PC-9 (cell line): ENCODE measurements at regions of chr1 and their contacts with region 1.

Region 1: GRCh38 chr1:32205401-32206370 is at the start of gene IQCC:
- DNase-seq: peak; percentile 82 to 91
- H3K4me3 ChIP-seq: peak within 1 kb of the TSS; percentile 78
- H3K27ac ChIP-seq: no peak within 1 kb of the TSS
- H3K4me1 ChIP-seq: peaks cover 24% of the 10 kb centered on the region
- H3K27me3 ChIP-seq: no peaks in the 10 kb centered on the region
- CTCF ChIP-seq: no peak; the same call in 1 of the 2 replicates
- total RNA-seq, gene IQCC: 4.9 and 5.0 TPM in 2 replicates

Region 2: DNA sequence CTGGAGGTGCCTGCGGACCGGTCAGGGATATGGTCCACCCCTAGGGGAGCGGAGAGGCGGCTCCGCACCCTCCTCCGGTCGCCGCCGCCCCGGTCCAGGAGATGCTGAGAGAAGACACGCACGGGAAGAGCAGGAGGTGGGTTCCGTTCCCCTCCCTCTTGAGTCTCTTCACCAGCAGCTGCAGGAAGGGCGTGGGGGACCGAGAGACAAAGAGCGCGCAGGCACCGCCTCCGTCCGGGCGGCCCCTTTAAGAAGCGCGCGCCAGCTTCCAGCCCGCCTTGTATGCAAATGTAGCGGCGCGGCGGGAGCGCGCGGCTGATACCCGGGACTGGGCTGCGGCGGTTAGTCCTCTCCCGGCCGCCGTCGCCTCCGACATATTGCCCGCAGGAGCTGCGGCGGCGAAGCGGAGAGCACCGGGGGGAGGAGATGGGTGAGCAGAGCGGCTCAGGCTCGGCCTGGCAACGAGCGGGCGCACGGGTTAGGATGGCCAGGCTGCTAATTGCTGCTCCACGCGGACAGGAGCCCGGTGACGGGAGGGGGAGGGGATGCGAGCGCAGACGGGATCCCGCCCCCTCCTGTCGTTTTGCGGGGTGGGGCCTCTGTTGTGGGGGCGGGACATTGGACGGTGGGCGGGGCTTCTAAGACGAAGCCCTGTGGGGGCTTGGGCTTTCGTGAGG is 132.9 kb before region 1 on chr1 and contains the start of gene TMEM39B:
- CTCF ChIA-PET with region 1: interaction called, 13 read pairs
- POLR2A ChIA-PET with region 1: no interaction called
- intact Hi-C with region 1: no loop called
- DNase-seq: peak; percentile 81 to 90
- H3K4me3 ChIP-seq: peak within 1 kb of the TSS; percentile 67
- H3K27ac ChIP-seq: peak within 1 kb of the TSS; percentile 25; the same call in 1 of the 2 replicates
- H3K4me1 ChIP-seq: peaks cover 16% of the 10 kb centered on the region
- H3K27me3 ChIP-seq: no peaks in the 10 kb centered on the region
- CTCF ChIP-seq: no peak
- total RNA-seq, gene TMEM39B: 26.0 and 27.2 TPM in 2 replicates

Region 3: GRCh38 chr1:32179443-32180185 is 26.1 kb before region 1 on chr1 and contains the start of gene TXLNA:
- CTCF ChIA-PET with region 1: no interaction called
- POLR2A ChIA-PET with region 1: no interaction called
- intact Hi-C with region 1: no loop called
- DNase-seq: peak; percentile 86 to 91
- H3K4me3 ChIP-seq: peak within 1 kb of the TSS; percentile 93
- H3K27ac ChIP-seq: peak within 1 kb of the TSS; percentile 69
- H3K4me1 ChIP-seq: peaks cover 29% of the 10 kb centered on the region
- H3K27me3 ChIP-seq: no peaks in the 10 kb centered on the region
- CTCF ChIP-seq: no peak
- total RNA-seq, gene TXLNA: 32.0 and 45.8 TPM in 2 replicates

Region 4: DNA sequence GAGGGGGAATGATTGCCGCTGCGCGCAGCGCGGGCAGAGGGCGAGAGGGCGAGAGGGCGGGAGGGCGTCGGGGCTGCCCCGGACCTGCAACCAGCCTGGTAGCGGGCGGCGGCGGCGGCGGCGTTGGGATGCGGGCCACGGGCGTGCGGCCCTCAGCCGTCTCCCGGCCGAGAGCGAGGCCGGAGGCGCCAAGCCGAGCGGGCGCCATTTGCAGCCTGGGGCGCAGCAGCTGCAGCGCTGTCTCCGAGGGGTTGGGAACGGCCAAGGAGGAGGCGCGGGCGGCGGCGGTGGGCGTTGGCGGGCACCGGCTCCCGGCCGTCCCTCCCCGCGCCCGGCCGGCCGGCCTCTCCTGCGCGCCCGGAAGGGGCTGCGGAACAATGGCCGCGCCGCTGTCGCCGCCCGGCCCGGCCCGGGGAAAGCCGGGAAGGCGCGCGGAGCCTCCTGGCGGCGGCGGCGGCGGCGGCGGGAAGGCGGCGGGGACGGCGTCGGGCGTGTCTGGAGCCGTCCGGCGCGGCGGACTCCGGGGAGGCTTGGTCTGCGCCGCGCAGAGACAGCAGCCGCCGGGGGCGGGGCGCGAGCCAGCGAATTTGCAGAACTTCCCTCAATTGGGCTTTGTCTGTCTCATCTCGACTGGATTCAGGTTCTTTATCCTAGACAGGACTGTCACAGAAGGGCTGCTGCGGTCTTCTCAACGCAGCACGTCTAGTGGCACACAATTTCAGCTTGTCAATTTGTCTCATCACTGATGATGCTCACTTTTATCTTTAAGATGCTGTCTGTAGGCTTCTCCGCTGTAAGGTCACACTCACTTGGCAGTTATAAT is 294.9 kb after region 1 on chr1:
- CTCF ChIA-PET with region 1: interaction called, 14 read pairs
- POLR2A ChIA-PET with region 1: no interaction called
- intact Hi-C with region 1: no loop called
- DNase-seq: peak in 1 of 2 experiments; percentile 57
- H3K4me3 ChIP-seq: peak overlapping the region; percentile 75
- H3K27ac ChIP-seq: no peak overlapping the region
- H3K4me1 ChIP-seq: no peaks in the 10 kb centered on the region
- H3K27me3 ChIP-seq: no peaks in the 10 kb centered on the region
- CTCF ChIP-seq: no peak